Heart left ventricle (tissue), 16 donors: ENCODE measurements at regions of chr7 and their contacts with region 1.

Region 1: DNA sequence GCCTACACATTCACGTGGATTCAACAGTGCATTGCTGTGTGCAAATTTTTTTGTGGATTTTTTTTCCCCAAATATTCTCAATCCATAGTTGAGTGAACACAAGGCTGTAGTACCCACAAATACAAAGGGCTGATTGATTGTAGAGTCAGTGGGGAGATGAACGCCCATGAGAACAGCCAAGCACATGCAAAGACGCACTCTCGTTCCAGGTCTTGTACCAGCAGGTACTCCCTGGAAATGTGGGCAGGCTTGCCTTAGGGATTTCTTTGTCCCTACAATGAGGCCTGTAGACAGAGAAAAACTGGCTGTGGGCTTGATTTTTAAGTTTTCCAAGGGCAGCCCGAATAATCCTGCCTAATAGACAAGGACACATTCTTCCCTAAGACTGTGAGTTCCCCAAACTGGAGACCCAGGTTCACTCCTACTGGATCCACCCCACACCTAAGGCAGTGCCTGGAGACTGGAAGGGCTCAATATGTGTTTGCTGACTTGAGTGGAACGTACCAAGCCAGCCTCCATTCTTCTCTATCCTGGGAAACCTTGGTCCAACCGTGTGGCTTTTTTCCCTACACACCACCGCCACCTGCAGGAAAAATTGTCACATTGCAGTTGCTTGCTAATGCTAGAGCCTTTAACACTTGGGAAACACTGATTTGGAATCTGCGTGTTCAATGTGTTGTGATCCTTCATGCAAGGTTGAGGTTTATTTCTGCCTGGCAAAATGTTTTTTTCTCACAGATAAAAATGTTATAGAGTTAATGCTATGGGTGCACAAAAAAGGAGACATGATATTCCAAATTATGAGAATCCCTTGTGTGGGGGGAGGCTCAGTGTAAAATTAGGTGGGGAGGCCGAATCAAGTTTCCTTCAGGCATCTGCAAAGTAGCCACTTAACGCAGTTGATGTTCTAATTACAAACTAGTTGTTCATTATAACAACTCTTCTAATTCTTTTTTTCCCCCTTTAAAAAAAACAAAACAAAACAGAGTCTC is 49.3 kb downstream of the PPP1R17 start:
- DNase-seq: peak in 4 of 5 donors; percentile 30 to 55 (median 43)
- ATAC-seq: peak; percentile 23 to 83 (median 70)
- H3K4me3 ChIP-seq: no peak overlapping the region
- H3K27ac ChIP-seq: no peak overlapping the region
- H3K4me1 ChIP-seq: no peaks in the 10 kb centered on the region
- H3K27me3 ChIP-seq: no peaks in the 10 kb centered on the region
- CTCF ChIP-seq: peak; percentile 70 to 86 (median 82)
- POLR2A ChIP-seq: no peak

Region 2: DNA sequence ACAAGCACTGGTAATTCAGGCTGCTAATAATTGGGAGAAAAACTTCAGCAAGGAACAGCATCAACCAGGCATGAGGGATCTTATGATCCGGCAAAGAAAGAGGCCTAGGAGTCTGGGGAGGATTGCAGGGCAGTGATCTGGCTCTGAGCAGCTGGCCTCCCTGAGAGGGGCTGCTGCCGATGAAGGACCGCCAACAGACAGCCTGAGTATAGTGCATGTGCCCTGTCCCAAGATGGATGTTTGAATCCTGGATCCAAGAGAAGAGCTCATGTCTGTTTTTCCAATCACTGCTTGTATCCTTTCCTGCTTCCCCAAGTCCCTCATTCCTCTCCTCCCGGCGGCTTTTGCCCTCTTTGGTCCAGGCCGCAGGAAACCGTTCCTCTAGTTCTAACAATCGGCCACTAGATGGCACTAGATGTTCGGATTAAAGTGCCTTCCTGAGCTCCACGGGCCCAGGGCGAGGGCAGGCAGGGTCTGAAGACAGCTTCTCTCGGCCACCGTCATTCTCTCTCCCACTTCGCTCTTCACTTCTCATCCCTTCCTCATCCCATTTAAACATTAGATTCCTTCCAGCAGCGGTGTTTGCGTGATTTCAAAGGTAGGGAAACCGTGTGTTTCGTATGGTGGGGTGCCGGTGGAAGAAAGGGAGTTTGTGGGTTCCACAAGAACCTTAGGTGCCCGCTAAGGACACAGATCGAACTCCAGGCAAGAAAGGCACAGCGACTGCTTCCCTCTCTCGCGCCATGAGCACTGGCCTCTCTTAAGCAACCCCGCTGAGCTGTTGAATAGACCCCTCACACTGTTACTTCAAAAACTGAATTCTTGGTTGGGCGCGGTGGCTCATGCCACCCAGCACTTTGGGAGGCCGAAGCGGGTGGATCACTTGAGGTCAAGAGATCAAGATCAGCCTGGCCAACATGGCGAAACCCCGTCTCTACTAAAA is 601.8 kb before region 1 on chr7:
- intact Hi-C with region 1: loop called (anchors 2 to 10 kb)
- DNase-seq: peak; percentile 64 to 80 (median 70)
- ATAC-seq: peak; percentile 89 to 97 (median 93)
- H3K4me3 ChIP-seq: no peak overlapping the region
- H3K27ac ChIP-seq: peak overlapping the region in 3 of 12 donors; percentile 5 to 22 (median 7)
- H3K4me1 ChIP-seq: peaks cover 0 to 5% (median 0%) of the 10 kb centered on the region in 12 donors
- H3K27me3 ChIP-seq: peaks cover 0 to 5% (median 0%) of the 10 kb centered on the region in 9 donors
- CTCF ChIP-seq: peak; percentile 66 to 83 (median 76)
- POLR2A ChIP-seq: no peak

Region 3: DNA sequence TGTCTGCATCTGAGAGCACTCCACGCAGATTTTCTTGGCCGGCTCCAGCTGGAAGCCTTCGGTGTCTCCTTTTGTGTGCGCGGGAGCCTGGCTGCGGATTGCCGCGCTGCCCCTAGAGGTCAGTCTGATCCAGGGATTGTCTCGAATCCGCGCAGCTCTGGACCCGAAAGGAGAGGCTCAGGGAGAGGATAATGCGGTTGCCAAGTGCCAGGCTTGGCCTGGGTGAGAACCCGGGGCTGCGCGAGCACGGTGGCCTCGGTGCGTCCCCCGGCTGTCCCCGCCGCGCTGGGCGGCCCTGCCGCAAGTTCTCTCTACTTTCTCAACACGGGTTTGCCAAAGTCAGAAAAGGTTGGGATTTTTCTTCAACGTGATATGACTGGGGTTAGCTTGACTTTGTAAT is 543.3 kb before region 1 on chr7:
- intact Hi-C with region 1: loop called in 1 of 10 experiments (anchors 10 kb)
- DNase-seq: peak; percentile 35 to 75 (median 62)
- ATAC-seq: peak; percentile 58 to 91 (median 85)
- H3K4me3 ChIP-seq: peak overlapping the region in 2 of 12 donors; percentile 32 to 38
- H3K27ac ChIP-seq: no peak overlapping the region
- H3K4me1 ChIP-seq: peaks cover 0 to 6% (median 0%) of the 10 kb centered on the region in 12 donors
- H3K27me3 ChIP-seq: peaks cover 0 to 20% (median 3%) of the 10 kb centered on the region in 9 donors
- CTCF ChIP-seq: peak; percentile 48 to 81 (median 65)
- POLR2A ChIP-seq: no peak

Region 4: DNA sequence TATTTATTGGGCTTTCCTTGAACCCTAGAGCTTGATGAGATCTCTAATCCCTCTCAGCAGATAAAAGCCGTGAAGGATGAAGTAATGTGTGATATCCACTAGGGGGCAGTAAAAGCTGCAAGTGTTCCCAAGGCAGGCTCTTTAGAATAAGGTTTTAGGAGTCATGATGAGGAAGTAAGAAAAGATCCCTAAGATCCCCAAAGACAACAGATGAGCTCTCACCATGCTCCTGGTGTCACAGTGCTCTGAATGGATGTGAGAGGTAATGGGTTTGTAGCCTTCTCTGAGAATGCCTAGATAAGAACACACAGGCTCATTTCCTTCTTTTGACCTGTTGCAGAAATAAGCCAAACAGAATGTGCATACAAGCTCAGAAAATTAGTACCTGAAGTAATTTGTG is 292.8 kb before region 1 on chr7:
- intact Hi-C with region 1: loop called (anchors 1 to 10 kb)
- DNase-seq: no peak
- ATAC-seq: peak in 2 of 4 donors; percentile 55 to 62
- H3K4me3 ChIP-seq: no peak overlapping the region
- H3K27ac ChIP-seq: no peak overlapping the region
- H3K4me1 ChIP-seq: no peaks in the 10 kb centered on the region
- H3K27me3 ChIP-seq: peaks cover 0 to 30% (median 3%) of the 10 kb centered on the region in 9 donors
- CTCF ChIP-seq: peak; percentile 62 to 86 (median 76)
- POLR2A ChIP-seq: no peak

Region 5: GRCh38 chr7:31648288-31648687 is 88.0 kb before region 1 on chr7:
- intact Hi-C with region 1: loop called (anchors 2 to 10 kb)
- DNase-seq: no peak
- ATAC-seq: no peak
- H3K4me3 ChIP-seq: no peak overlapping the region
- H3K27ac ChIP-seq: no peak overlapping the region
- H3K4me1 ChIP-seq: no peaks in the 10 kb centered on the region
- H3K27me3 ChIP-seq: no peaks in the 10 kb centered on the region
- CTCF ChIP-seq: peak in 8 of 12 donors; percentile 10 to 39 (median 32)
- POLR2A ChIP-seq: no peak